Endothelial cell of umbilical vein (primary cell): ENCODE measurements at regions of chr20 and their contacts with region 1.

Region 1: DNA sequence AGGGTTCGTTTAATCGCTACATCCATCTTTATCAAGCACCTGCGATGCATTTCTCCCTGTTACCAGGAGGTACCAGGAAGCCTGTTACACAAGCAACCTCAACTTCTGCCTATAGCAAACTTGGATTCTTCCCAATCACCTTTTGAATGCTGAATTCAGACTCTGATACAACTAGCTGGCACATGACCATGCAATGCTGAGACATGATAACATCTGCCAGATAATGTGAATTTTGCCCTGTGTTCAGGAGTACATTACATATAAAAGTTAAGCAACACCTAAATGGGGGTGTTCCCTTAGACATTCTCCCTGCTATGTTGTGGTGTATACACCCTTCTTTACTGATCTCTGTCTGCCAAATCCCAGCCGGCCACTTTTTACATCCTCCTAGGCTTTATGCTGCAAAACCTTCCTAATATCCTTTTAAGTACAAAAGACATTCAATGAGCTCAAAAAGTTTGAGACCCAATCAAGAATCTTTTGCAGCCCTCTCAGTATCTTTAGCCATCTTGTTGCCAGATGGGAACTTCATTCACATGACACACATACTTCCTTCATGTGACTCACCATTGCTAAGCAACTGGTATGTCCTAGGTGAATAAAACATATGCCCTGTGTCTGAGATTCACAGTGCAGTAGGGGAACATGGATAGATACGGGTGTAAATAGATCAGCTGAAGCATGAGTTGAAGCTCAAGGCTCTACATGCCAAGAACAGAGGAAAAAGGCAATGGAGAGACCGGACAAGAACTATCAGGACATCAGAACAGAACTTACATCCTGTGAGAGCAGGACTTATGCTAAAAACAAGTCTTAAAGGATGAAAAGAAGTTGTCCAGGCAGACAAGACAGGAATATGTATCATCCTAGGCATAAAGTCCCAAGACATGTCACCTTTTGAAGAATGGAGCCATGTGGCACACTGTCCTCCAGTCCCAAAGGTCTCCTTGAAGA is 84.3 kb downstream of the ZHX3 start:
- DNase-seq: peak; percentile 59
- H3K4me3 ChIP-seq: no peak overlapping the region
- H3K27ac ChIP-seq: peak overlapping the region; percentile 40
- H3K4me1 ChIP-seq: peaks cover 17% of the 10 kb centered on the region
- H3K27me3 ChIP-seq: no peaks in the 10 kb centered on the region
- CTCF ChIP-seq: no peak
- POLR2A ChIP-seq: no peak

Region 2: GRCh38 chr20:40993794-40994548 is 239.3 kb before region 1 on chr20:
- CTCF ChIA-PET with region 1: no interaction called
- POLR2A ChIA-PET with region 1: no interaction called
- dilution Hi-C with region 1: no loop called
- intact Hi-C with region 1: no loop called
- DNase-seq: no peak
- H3K4me3 ChIP-seq: no peak overlapping the region
- H3K27ac ChIP-seq: no peak overlapping the region
- H3K4me1 ChIP-seq: peaks cover 16% of the 10 kb centered on the region
- H3K27me3 ChIP-seq: no peaks in the 10 kb centered on the region
- CTCF ChIP-seq: no peak
- POLR2A ChIP-seq: no peak

Region 3: GRCh38 chr20:41028348-41029148 is 204.7 kb before region 1 on chr20 and contains the start of gene TOP1:
- CTCF ChIA-PET with region 1: no interaction called
- POLR2A ChIA-PET with region 1: no interaction called
- dilution Hi-C with region 1: no loop called
- intact Hi-C with region 1: no loop called
- DNase-seq: peak; percentile 100
- H3K4me3 ChIP-seq: peak within 1 kb of the TSS; percentile 83 to 98 (median 96)
- H3K27ac ChIP-seq: peak within 1 kb of the TSS; percentile 98
- H3K4me1 ChIP-seq: peaks cover 38% of the 10 kb centered on the region
- H3K27me3 ChIP-seq: no peaks in the 10 kb centered on the region
- CTCF ChIP-seq: no peak
- POLR2A ChIP-seq: peak; percentile 97
- total RNA-seq, gene TOP1: 75.1 and 77.4 TPM in 2 replicates

Region 4: DNA sequence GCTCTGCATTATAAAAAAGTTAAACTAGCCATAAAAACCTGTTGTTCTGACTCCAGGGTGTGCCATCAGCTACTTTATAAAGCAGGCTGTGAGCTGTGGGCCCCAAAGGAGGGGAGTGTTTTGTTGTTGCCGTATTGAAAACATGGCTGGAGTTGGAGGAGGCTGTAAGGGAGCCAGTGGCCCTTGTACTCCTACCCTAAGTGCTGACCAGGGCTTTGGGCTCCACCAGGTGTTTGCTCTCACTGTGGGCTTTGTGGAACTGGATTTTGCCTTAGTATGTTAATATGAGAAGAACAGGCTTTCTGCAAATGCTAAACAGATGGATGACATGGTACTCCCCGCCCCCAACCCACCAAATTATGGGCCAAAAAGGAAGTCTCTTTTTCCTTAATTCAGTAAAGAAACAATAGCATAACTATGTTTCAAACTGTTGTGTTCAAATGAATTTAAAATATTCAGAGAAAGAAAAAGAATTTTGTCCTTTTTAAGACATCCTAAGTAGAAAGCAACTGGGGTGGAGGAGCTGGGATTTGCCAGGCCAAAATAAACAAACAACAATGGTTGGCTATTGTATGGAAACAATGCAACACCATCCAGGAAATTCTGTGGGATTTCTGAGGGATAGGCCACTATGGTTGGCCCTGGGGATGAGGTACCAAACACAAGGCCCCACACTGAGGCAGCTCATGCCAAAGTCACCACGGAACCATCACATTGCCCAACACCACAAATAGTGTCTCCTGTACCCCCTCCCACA is 32.6 kb before region 1 on chr20:
- CTCF ChIA-PET with region 1: interaction called, 13 read pairs
- POLR2A ChIA-PET with region 1: no interaction called
- dilution Hi-C with region 1: no loop called
- intact Hi-C with region 1: loop called (anchors 1 kb)
- DNase-seq: peak; percentile 87
- H3K4me3 ChIP-seq: no peak overlapping the region
- H3K27ac ChIP-seq: peak overlapping the region; percentile 63
- H3K4me1 ChIP-seq: peaks cover 18% of the 10 kb centered on the region
- H3K27me3 ChIP-seq: no peaks in the 10 kb centered on the region
- CTCF ChIP-seq: no peak
- POLR2A ChIP-seq: no peak

Region 5: DNA sequence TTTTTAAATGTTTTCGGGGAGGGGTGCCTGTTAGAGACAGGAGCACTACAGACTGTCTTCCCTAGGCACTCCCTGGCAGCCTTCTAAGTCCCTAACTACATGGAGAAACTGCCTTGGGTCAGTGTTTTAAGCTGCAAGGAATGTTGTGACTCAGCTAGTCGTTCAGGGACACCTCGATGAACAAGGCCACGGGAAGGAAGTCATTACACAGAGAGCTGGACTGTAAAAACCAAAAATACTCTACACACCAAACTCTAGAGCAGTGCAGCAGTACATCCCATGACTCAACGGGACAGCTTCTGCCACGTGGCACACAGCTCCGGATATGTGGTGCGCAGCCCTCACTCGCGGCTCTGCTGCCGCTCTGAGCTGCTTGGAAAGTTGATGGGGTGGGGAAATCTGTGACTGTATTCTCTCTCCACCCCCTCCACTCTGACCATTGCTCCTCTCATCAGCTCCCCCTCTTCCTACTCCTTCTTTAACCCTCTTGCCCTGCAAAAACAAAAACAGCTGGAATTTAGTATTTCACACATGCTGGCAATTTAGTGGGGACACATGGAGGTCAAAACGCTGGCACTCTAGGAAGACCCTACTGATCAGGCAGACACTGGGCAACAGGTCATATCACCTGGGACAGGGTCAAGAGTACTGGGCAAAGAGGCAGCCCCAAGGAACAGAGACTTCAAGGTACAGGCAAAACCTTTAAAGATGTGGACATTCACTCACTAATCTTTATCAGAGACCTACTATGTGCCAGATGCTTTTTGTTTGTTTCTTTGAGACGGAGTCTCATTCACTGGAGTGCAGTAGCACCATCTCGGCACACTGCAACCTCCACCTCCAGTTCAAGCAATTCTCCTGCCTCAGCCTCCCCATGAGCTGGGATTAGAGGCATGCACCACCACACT is 96.4 kb after region 1 on chr20:
- CTCF ChIA-PET with region 1: interaction called, 14 read pairs
- POLR2A ChIA-PET with region 1: no interaction called
- dilution Hi-C with region 1: no loop called
- intact Hi-C with region 1: loop called (anchors 2 kb)
- DNase-seq: peak; percentile 94
- H3K4me3 ChIP-seq: no peak overlapping the region
- H3K27ac ChIP-seq: peak overlapping the region; percentile 89
- H3K4me1 ChIP-seq: peaks cover 20% of the 10 kb centered on the region
- H3K27me3 ChIP-seq: no peaks in the 10 kb centered on the region
- CTCF ChIP-seq: no peak
- POLR2A ChIP-seq: peak; percentile 66

Region 6: GRCh38 chr20:41411391-41411847 is 178.2 kb after region 1 on chr20:
- CTCF ChIA-PET with region 1: interaction called, 4 read pairs
- POLR2A ChIA-PET with region 1: no interaction called
- dilution Hi-C with region 1: no loop called
- intact Hi-C with region 1: loop called (anchors 1 kb)
- DNase-seq: peak; percentile 48
- H3K4me3 ChIP-seq: no peak overlapping the region
- H3K27ac ChIP-seq: no peak overlapping the region
- H3K4me1 ChIP-seq: no peaks in the 10 kb centered on the region
- H3K27me3 ChIP-seq: no peaks in the 10 kb centered on the region
- CTCF ChIP-seq: peak; percentile 12 to 19
- POLR2A ChIP-seq: no peak

Region 7: GRCh38 chr20:41609474-41609873 is 376.2 kb after region 1 on chr20:
- CTCF ChIA-PET with region 1: no interaction called
- POLR2A ChIA-PET with region 1: no interaction called
- dilution Hi-C with region 1: no loop called
- intact Hi-C with region 1: no loop called
- DNase-seq: no peak
- H3K4me3 ChIP-seq: no peak overlapping the region
- H3K27ac ChIP-seq: no peak overlapping the region
- H3K4me1 ChIP-seq: no peaks in the 10 kb centered on the region
- H3K27me3 ChIP-seq: no peaks in the 10 kb centered on the region
- CTCF ChIP-seq: no peak
- POLR2A ChIP-seq: no peak